Naive thymus-derived CD4-positive, alpha-beta T cell (primary cell): ENCODE measurements at regions of chr14 and their contacts with region 1.

Region 1: GRCh38 chr14:23567192-23568020 is at the start of gene AP1G2:
- DNase-seq: peak; percentile 67 to 87 (median 83)
- ATAC-seq: peak; percentile 93
- H3K4me3 ChIP-seq: peak within 1 kb of the TSS; percentile 98
- H3K4me3 Mint-ChIP-seq: peak within 1 kb of the TSS; percentile 98 to 100 (median 99)
- H3K27ac ChIP-seq: peak within 1 kb of the TSS; percentile 81
- H3K27ac Mint-ChIP-seq: peak within 1 kb of the TSS; percentile 96 to 99 (median 98)
- H3K4me1 ChIP-seq: peaks cover 14 to 16% of the 10 kb centered on the region in 2 donors
- H3K4me1 Mint-ChIP-seq: peaks cover 19 to 48% (median 43%) of the 10 kb centered on the region in 7 donors
- H3K27me3 ChIP-seq: no peaks in the 10 kb centered on the region
- H3K27me3 Mint-ChIP-seq: peaks cover 0 to 11% (median 0%) of the 10 kb centered on the region in 5 donors
- total RNA-seq, gene AP1G2: 266 to 548 (median 293) TPM

Region 2: GRCh38 chr14:23269193-23269592 is 298.2 kb before region 1 on chr14:
- CTCF ChIA-PET with region 1: no interaction called
- POLR2A ChIA-PET with region 1: no interaction called
- intact Hi-C with region 1: loop called in 1 of 2 experiments (anchors 1 kb)
- DNase-seq: no peak
- ATAC-seq: no peak
- H3K4me3 ChIP-seq: no peak overlapping the region
- H3K4me3 Mint-ChIP-seq: no peak overlapping the region
- H3K27ac ChIP-seq: no peak overlapping the region
- H3K27ac Mint-ChIP-seq: no peak overlapping the region
- H3K4me1 ChIP-seq: no peaks in the 10 kb centered on the region
- H3K4me1 Mint-ChIP-seq: no peaks in the 10 kb centered on the region
- H3K27me3 ChIP-seq: peaks cover 0 to 4% of the 10 kb centered on the region in 2 donors
- H3K27me3 Mint-ChIP-seq: peaks cover 0 to 18% (median 12%) of the 10 kb centered on the region in 5 donors

Region 3: GRCh38 chr14:23327947-23328744 is 239.3 kb before region 1 on chr14:
- CTCF ChIA-PET with region 1: no interaction called
- POLR2A ChIA-PET with region 1: no interaction called
- intact Hi-C with region 1: loop called in 1 of 2 experiments (anchors 1 kb)
- DNase-seq: peak in 8 of 9 donors; percentile 49 to 69 (median 59)
- ATAC-seq: peak; percentile 86
- H3K4me3 ChIP-seq: no peak overlapping the region
- H3K4me3 Mint-ChIP-seq: no peak overlapping the region
- H3K27ac ChIP-seq: no peak overlapping the region
- H3K27ac Mint-ChIP-seq: peak overlapping the region in 3 of 9 donors; percentile 6 to 34 (median 23)
- H3K4me1 ChIP-seq: peaks cover 0 to under 1% of the 10 kb centered on the region in 2 donors
- H3K4me1 Mint-ChIP-seq: peaks cover 3 to 11% (median 8%) of the 10 kb centered on the region in 7 donors
- H3K27me3 ChIP-seq: no peaks in the 10 kb centered on the region
- H3K27me3 Mint-ChIP-seq: peaks cover 0 to 6% (median 0%) of the 10 kb centered on the region in 5 donors

Region 4: DNA sequence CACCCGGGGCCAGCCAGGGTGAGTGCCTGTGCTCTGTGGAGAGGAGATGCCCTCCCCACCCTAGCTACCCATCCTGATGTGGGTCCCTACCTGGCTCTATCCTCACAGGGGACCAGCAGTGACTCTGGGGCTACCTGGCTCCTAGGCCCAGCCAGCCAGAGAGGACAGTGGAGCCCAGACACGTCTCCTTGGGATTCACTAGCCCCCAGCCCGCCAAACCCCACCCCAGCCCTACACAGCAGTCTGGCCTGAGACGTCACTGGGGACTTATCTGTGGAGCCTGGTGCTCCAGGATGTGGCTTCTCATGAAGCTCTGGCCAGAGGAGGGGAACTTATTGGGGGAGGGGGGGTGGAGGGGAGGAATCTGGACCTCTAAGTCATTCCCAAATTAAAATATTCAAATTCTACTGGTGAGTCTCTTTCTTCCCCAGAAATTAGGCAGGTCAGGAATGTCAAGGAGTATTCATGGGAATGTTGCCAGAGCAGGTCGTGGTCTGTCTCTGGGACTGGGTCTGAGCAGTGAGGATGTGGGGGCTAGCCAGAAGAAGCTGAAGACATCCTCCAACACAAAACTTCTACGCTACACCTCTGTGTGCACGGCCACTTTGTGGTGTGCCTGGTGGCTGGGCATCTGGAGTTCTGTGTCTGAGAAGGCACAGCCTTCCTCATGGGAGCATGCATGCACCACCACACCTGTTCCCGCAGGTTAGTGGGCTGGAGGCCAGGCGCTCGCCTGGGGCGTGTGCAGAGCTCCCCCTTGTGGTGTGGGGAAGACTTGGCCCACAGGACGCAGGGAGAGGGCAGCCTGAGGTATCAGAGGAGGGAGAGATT is 187.8 kb before region 1 on chr14:
- CTCF ChIA-PET with region 1: no interaction called
- POLR2A ChIA-PET with region 1: no interaction called
- intact Hi-C with region 1: no loop called
- DNase-seq: peak; percentile 48 to 77 (median 68)
- ATAC-seq: peak; percentile 86
- H3K4me3 ChIP-seq: no peak overlapping the region
- H3K4me3 Mint-ChIP-seq: no peak overlapping the region
- H3K27ac ChIP-seq: no peak overlapping the region
- H3K27ac Mint-ChIP-seq: no peak overlapping the region
- H3K4me1 ChIP-seq: no peaks in the 10 kb centered on the region
- H3K4me1 Mint-ChIP-seq: peaks cover 0 to 3% (median 0%) of the 10 kb centered on the region in 7 donors
- H3K27me3 ChIP-seq: no peaks in the 10 kb centered on the region
- H3K27me3 Mint-ChIP-seq: peaks cover 0 to 16% (median 0%) of the 10 kb centered on the region in 5 donors

Region 5: GRCh38 chr14:23478111-23478759 is 89.2 kb before region 1 on chr14:
- CTCF ChIA-PET with region 1: interaction called, 31 read pairs
- POLR2A ChIA-PET with region 1: interaction called, 5 read pairs
- intact Hi-C with region 1: loop called (anchors 1 kb)
- DNase-seq: peak; percentile 35 to 75 (median 67)
- ATAC-seq: peak; percentile 89
- H3K4me3 ChIP-seq: no peak overlapping the region
- H3K4me3 Mint-ChIP-seq: peak overlapping the region in 1 of 10 donors; percentile 14
- H3K27ac ChIP-seq: no peak overlapping the region
- H3K27ac Mint-ChIP-seq: peak overlapping the region in 3 of 9 donors; percentile 7 to 61 (median 29)
- H3K4me1 ChIP-seq: no peaks in the 10 kb centered on the region
- H3K4me1 Mint-ChIP-seq: peaks cover 2 to 20% (median 13%) of the 10 kb centered on the region in 7 donors
- H3K27me3 ChIP-seq: no peaks in the 10 kb centered on the region
- H3K27me3 Mint-ChIP-seq: no peaks in the 10 kb centered on the region

Region 6: DNA sequence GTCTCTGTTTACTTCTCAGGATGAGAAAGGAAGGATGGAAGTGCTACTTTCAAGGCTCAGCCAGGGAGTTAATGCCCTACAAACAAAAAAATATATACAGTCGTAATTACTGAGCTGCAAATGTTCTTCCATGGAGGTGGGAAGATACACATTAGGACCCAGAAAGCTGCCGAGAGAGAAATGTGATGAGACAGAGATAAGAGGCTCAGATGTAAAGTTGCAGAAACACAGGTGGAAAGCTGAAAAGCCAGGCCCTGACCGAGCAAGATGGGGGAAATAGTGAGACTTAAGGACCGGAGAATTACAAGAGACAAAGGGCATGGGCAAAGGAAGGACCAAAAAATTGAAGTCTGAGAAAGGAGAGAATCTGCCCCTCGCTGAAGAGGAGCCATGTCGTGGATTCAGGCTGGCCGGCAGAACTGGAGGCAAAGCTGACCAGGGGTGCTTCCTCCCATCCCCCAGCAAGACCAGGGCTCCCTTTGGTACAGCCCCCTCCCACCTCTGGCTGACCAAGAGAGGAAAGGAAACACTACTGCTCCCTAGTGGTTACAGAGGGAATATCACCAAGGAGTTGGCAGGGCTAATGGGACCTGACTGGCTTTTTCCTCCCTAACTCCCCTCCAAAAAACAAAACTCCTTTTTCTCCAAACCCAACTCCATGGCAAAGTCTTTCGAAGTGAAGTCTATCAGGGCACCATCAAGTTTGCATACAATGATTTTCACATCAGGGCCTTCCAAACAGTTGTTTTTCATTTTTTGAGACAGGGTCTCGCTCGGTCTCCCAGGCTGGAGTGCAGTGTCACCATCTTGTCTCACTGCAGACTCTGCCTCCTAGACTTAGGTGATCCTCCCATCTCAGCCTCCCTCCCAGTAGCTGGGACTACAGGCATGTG is 27.9 kb before region 1 on chr14:
- CTCF ChIA-PET with region 1: no interaction called
- POLR2A ChIA-PET with region 1: interaction called, 6 read pairs
- intact Hi-C with region 1: loop called in 1 of 2 experiments (anchors 1 kb)
- DNase-seq: peak in 6 of 9 donors; percentile 20 to 53 (median 34)
- ATAC-seq: peak; percentile 85
- H3K4me3 ChIP-seq: no peak overlapping the region
- H3K4me3 Mint-ChIP-seq: no peak overlapping the region
- H3K27ac ChIP-seq: no peak overlapping the region
- H3K27ac Mint-ChIP-seq: peak overlapping the region in 1 of 9 donors; percentile 83
- H3K4me1 ChIP-seq: no peaks in the 10 kb centered on the region
- H3K4me1 Mint-ChIP-seq: peaks cover 0 to 6% (median 0%) of the 10 kb centered on the region in 7 donors
- H3K27me3 ChIP-seq: no peaks in the 10 kb centered on the region
- H3K27me3 Mint-ChIP-seq: no peaks in the 10 kb centered on the region

Region 7: GRCh38 chr14:23555882-23556699 is 11.3 kb before region 1 on chr14 and contains the start of gene THTPA:
- CTCF ChIA-PET with region 1: no interaction called
- POLR2A ChIA-PET with region 1: interaction called, 15 read pairs
- intact Hi-C with region 1: loop called (anchors 1 kb)
- DNase-seq: peak; percentile 84 to 96 (median 89)
- ATAC-seq: peak; percentile 94
- H3K4me3 ChIP-seq: peak within 1 kb of the TSS; percentile 84
- H3K4me3 Mint-ChIP-seq: peak within 1 kb of the TSS; percentile 80 to 99 (median 96)
- H3K27ac ChIP-seq: peak within 1 kb of the TSS; percentile 83
- H3K27ac Mint-ChIP-seq: peak within 1 kb of the TSS; percentile 78 to 97 (median 94)
- H3K4me1 ChIP-seq: peaks cover 10 to 16% of the 10 kb centered on the region in 2 donors
- H3K4me1 Mint-ChIP-seq: peaks cover 18 to 45% (median 38%) of the 10 kb centered on the region in 7 donors
- H3K27me3 ChIP-seq: no peaks in the 10 kb centered on the region
- H3K27me3 Mint-ChIP-seq: peaks cover 0 to under 1% (median 0%) of the 10 kb centered on the region in 5 donors
- total RNA-seq, gene THTPA: 16.4 to 26.7 (median 19.2) TPM

Region 8: GRCh38 chr14:24080888-24081738 is 513.7 kb after region 1 on chr14:
- CTCF ChIA-PET with region 1: no interaction called
- POLR2A ChIA-PET with region 1: no interaction called
- intact Hi-C with region 1: loop called in 1 of 2 experiments (anchors 1 kb)
- DNase-seq: peak; percentile 46 to 75 (median 72)
- ATAC-seq: peak; percentile 92
- H3K4me3 ChIP-seq: peak overlapping the region; percentile 82
- H3K4me3 Mint-ChIP-seq: peak overlapping the region; percentile 80 to 90 (median 86)
- H3K27ac ChIP-seq: peak overlapping the region; percentile 75
- H3K27ac Mint-ChIP-seq: peak overlapping the region; percentile 32 to 92 (median 85)
- H3K4me1 ChIP-seq: peaks cover 7 to 14% of the 10 kb centered on the region in 2 donors
- H3K4me1 Mint-ChIP-seq: peaks cover 16 to 20% (median 18%) of the 10 kb centered on the region in 7 donors
- H3K27me3 ChIP-seq: no peaks in the 10 kb centered on the region
- H3K27me3 Mint-ChIP-seq: peaks cover 0 to 20% (median 0%) of the 10 kb centered on the region in 5 donors